Psoas muscle (tissue), 8 donors: ENCODE measurements at regions of chr17 and their contacts with region 1.

Region 1: GRCh38 chr17:74864866-74865395 is 5.2 kb upstream of the GRIN2C start:
- DNase-seq: peak; percentile 75 to 88
- ATAC-seq: peak; percentile 69 to 87 (median 76)
- H3K4me3 ChIP-seq: no peak overlapping the region
- H3K27ac ChIP-seq: no peak overlapping the region
- H3K4me1 ChIP-seq: peaks cover 18% of the 10 kb centered on the region
- H3K27me3 ChIP-seq: peaks cover 0 to 22% (median 17%) of the 10 kb centered on the region in 3 donors
- CTCF ChIP-seq: peak; percentile 95

Region 2: DNA sequence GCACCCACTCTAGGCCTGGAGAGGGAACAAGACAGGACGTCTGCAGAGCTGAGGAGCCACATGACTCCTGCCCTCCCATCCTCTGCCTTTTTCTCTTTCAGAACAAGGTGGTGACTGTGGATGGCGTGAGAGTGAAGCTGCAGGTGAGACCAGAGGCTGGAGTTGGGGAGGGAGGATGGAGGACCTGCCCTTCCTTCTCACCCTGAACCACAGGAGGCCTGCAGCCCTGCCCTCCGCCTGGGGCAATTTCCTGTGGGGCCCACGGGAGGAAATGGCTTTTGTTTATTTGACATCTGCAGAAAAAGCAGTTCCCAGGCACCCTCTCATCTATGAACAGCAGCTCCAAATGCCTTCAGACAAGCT is 122.8 kb before region 1 on chr17:
- intact Hi-C with region 1: loop called (anchors 1 to 2 kb)
- DNase-seq: no peak
- ATAC-seq: no peak
- H3K4me3 ChIP-seq: no peak overlapping the region
- H3K27ac ChIP-seq: no peak overlapping the region
- H3K4me1 ChIP-seq: no peaks in the 10 kb centered on the region
- H3K27me3 ChIP-seq: peaks cover 0 to 41% (median 14%) of the 10 kb centered on the region in 3 donors
- CTCF ChIP-seq: no peak

Region 3: DNA sequence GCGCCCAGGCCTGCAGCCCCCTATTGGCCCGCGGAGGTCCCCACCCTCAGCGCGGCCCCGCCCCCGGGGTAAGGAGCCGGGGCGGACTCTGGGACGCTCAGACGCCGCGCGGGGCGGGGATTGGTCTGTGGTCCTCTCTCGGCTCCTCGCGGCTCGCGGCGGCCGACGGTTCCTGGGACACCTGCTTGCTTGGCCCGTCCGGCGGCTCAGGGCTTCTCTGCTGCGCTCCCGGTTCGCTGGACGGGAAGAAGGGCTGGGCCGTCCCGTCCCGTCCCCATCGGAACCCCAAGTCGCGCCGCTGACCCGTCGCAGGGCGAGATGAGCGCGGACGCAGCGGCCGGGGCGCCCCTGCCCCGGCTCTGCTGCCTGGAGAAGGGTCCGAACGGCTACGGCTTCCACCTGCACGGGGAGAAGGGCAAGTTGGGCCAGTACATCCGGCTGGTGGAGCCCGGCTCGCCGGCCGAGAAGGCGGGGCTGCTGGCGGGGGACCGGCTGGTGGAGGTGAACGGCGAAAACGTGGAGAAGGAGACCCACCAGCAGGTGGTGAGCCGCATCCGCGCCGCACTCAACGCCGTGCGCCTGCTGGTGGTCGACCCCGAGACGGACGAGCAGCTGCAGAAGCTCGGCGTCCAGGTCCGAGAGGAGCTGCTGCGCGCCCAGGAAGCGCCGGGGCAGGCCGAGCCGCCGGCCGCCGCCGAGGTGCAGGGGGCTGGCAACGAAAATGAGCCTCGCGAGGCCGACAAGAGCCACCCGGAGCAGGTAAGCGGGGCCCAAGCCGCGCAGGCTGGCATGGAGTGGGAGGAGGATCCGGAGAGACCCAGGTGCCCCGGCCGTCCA is 116.2 kb before region 1 on chr17 and contains the start of gene NHERF1:
- intact Hi-C with region 1: loop called (anchors 1 to 2 kb)
- DNase-seq: peak; percentile 96
- ATAC-seq: peak; percentile 92 to 96 (median 94)
- H3K4me3 ChIP-seq: peak within 1 kb of the TSS; percentile 80
- H3K27ac ChIP-seq: peak within 1 kb of the TSS; percentile 73
- H3K4me1 ChIP-seq: peaks cover 11% of the 10 kb centered on the region
- H3K27me3 ChIP-seq: peaks cover 0 to 11% (median 1%) of the 10 kb centered on the region in 3 donors
- CTCF ChIP-seq: no peak
- total RNA-seq, gene NHERF1: 3.9 to 16.6 (median 4.9) TPM

Region 4: GRCh38 chr17:74790161-74791054 is 74.5 kb before region 1 on chr17:
- intact Hi-C with region 1: loop called (anchors 1 to 2 kb)
- DNase-seq: no peak
- ATAC-seq: no peak
- H3K4me3 ChIP-seq: no peak overlapping the region
- H3K27ac ChIP-seq: no peak overlapping the region
- H3K4me1 ChIP-seq: no peaks in the 10 kb centered on the region
- H3K27me3 ChIP-seq: no peaks in the 10 kb centered on the region
- CTCF ChIP-seq: no peak

Region 5: GRCh38 chr17:74904687-74905409 is 39.9 kb after region 1 on chr17:
- intact Hi-C with region 1: no loop called
- DNase-seq: no peak
- ATAC-seq: no peak
- H3K4me3 ChIP-seq: no peak overlapping the region
- H3K27ac ChIP-seq: no peak overlapping the region
- H3K4me1 ChIP-seq: no peaks in the 10 kb centered on the region
- H3K27me3 ChIP-seq: peaks cover 0 to 41% (median 10%) of the 10 kb centered on the region in 3 donors
- CTCF ChIP-seq: no peak